AG04449 (cell line): ENCODE measurements at regions of chr2 and their contacts with region 1.

Region 1: DNA sequence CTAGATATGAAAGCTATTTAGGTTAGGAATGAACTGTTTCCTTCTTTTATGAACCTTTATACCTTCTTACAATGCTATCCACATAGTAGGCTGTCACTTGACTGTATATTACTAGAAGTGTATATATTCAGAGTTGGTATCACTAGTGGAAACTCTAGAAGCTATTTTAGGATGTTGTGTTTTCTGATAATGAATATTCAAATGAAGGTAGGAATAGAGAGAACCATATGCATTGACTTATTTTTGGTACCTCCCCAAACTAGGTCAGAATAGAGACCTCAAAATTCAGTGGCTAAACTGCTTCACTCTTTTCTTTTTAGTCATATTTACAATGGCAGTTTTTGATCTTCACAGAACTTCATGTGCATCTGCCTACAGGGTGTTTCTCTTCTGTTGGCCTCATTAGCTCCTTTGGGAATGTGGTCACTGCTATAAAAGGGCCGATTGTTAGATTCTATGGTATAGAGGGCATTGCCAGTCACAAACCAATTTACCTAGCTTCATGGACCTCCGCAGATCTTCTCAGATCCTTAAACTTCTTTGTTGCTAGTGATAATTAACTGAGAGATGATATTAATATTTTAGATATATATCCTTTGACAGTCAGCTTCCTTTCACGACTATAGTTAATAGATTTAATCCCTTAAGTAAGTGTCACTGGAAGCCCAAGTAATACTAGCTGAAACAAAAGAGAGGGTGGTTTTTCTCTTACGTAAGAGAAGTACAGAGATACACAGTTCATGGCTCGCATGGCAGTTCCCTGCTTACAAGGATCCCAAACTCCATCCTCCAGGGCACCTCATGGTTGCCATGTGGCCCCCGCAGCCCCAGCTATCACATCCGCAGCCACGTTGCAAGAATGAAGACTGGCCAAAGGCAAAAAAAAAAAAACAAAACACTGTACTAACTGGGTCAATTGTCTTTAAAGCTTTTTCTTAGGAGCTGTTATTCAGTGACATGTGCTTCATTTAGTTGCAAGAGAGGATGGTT is 61.0 kb downstream of the TSPYL6 start:
- DNase-seq: no peak
- H3K4me3 ChIP-seq: no peak overlapping the region
- CTCF ChIP-seq: no peak

Region 2: GRCh38 chr2:54065411-54065810 is 129.6 kb before region 1 on chr2:
- CTCF ChIA-PET with region 1: no interaction called
- POLR2A ChIA-PET with region 1: no interaction called
- DNase-seq: peak; percentile 93
- H3K4me3 ChIP-seq: no peak overlapping the region
- CTCF ChIP-seq: no peak

Region 3: GRCh38 chr2:54081574-54081973 is 113.5 kb before region 1 on chr2:
- CTCF ChIA-PET with region 1: no interaction called
- POLR2A ChIA-PET with region 1: no interaction called
- DNase-seq: no peak
- H3K4me3 ChIP-seq: no peak overlapping the region
- CTCF ChIP-seq: no peak

Region 4: DNA sequence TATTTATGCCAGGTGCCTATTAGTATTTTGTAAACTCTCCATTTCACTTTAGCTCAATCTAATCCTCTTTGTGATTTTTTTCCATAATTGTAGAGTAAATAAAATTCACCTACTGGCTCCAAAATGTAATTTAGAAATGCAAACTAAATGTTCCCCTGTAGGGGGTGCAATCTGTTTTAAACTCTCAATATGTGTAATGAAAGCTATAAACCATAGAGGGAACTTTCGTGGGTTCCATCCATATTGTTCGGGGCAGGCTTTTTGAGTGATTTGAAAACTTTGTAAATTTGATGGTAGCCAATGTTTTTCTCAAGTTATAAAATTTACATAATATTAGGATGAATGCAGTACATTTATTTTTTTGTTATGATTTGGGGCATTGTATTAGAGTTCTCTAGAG is 11.5 kb after region 1 on chr2:
- CTCF ChIA-PET with region 1: interaction called, 29 read pairs
- POLR2A ChIA-PET with region 1: no interaction called
- DNase-seq: no peak
- H3K4me3 ChIP-seq: no peak overlapping the region
- CTCF ChIP-seq: peak; percentile 26

Region 5: DNA sequence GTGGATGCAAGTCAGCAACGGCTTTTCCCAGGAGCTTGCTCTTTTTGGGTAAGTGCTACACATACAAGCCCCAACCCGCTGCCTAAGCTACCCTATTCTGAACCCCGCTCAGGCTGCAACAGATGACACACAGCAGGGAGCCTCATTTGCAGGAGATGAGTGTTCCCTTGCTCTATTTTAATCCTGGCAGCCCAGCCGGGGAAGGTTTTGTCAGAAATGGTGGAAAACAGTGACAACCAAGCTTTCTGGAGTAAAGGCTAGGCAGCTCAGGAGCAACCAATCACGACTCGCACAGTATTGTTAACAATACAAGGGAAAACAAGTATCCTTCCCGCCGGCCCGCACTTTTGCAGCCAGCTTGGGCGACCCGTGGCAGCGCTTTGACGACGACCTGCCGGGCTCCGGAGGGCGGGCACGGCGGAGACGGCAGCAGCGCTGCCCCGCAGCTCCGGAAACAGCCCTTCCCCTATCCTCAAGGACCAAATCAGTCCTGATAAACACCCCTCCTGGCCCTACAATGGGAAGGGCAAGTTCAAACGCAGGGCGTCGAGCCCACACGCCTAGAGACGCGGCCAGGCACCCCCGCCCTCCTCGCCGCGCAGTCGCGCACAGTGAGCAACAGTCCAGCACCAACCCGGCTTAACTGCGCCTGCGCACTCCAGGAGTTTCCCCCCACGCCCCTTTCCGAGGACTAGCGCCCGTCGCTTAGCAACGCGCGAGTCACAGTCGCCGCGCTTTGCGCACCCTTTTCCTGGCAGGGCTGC is 135.3 kb after region 1 on chr2:
- CTCF ChIA-PET with region 1: no interaction called
- POLR2A ChIA-PET with region 1: no interaction called
- DNase-seq: no peak
- H3K4me3 ChIP-seq: peak overlapping the region; percentile 79
- CTCF ChIP-seq: no peak